MCF 10A (cell line): ENCODE measurements at regions of chr16 and their contacts with region 1.

Region 1: GRCh38 chr16:81940781-81941560 is 70.3 kb downstream of the SDR42E1 start:
- DNase-seq: peak; percentile 66
- H3K4me3 Mint-ChIP-seq: no peak overlapping the region
- H3K27ac Mint-ChIP-seq: no peak overlapping the region
- H3K4me1 Mint-ChIP-seq: peaks cover 7% of the 10 kb centered on the region
- H3K27me3 Mint-ChIP-seq: no peaks in the 10 kb centered on the region
- CTCF ChIP-seq: peak; percentile 62

Region 2: DNA sequence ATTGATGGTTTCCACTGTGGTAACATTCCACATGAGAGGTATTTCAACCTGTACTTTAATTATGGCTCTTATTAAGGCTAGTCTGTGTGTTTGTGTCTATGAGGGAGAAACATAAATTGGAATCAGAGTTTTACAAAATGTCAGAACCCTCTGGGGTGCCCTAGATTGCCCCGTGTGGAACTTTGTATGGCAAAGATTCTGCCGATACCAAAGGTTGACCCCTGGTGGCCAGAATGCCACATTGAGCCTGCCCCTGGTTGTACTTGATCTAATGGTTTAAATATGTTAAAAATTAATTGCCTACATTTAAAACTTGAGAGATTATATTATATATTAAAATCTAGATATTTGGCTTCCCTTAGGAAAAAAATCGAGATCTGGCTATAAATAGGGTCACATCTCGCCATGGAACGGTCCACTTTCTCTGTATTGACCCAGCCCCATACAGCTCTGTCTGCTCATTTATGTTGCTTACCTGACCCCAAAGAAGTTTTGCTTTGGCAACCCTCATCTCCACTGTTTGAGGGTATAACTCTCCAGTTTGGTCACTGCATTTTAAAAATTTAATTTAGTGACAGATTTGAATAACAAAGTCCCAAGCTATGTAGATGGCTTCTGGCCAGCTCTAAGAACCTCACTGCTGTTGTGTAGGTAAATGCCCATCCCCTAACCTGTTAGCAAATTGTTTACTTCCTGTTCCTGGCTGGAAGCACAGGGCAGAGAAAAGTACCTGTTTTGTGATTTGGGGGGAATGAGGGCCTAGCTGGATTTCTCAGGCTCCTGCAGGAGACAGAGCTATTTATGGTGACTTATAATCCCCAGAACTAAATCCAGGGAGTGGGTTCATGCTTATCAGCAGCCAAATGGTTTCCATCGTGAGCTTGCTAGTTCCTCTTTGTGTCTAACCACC is 66.9 kb before region 1 on chr16:
- CTCF ChIA-PET with region 1: no interaction called
- POLR2A ChIA-PET with region 1: no interaction called
- intact Hi-C with region 1: no loop called
- DNase-seq: peak; percentile 58
- H3K4me3 Mint-ChIP-seq: no peak overlapping the region
- H3K27ac Mint-ChIP-seq: no peak overlapping the region
- H3K4me1 Mint-ChIP-seq: no peaks in the 10 kb centered on the region
- H3K27me3 Mint-ChIP-seq: no peaks in the 10 kb centered on the region
- CTCF ChIP-seq: peak; percentile 79

Region 3: GRCh38 chr16:81891736-81892357 is 49.1 kb before region 1 on chr16:
- CTCF ChIA-PET with region 1: interaction called, 6 read pairs
- POLR2A ChIA-PET with region 1: no interaction called
- intact Hi-C with region 1: loop called (anchors 5 kb)
- DNase-seq: no peak
- H3K4me3 Mint-ChIP-seq: no peak overlapping the region
- H3K27ac Mint-ChIP-seq: no peak overlapping the region
- H3K4me1 Mint-ChIP-seq: peaks cover 14% of the 10 kb centered on the region
- H3K27me3 Mint-ChIP-seq: no peaks in the 10 kb centered on the region
- CTCF ChIP-seq: no peak

Region 4: DNA sequence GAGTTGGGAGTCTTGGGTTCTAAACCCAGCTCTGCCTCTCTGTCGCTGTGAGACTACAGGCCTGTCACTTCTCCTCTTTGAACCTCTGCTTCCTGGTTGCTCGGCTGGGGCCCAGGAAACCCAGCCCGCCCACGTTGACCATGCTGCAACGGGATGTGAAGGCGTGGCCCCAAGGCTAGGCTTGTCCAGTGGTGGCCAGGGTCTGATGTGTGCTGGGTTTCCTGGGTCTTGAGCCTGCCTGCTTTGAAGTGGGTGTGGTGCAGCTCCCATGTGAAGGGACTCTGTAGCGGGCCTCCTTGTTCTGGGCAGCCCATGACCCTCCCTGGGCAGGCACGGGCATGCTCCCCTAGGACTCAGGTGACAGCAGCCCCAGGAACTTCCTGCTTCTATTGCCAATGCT is 12.0 kb before region 1 on chr16:
- CTCF ChIA-PET with region 1: interaction called, 29 read pairs
- POLR2A ChIA-PET with region 1: no interaction called
- intact Hi-C with region 1: no loop called
- DNase-seq: peak; percentile 72
- H3K4me3 Mint-ChIP-seq: no peak overlapping the region
- H3K27ac Mint-ChIP-seq: no peak overlapping the region
- H3K4me1 Mint-ChIP-seq: no peaks in the 10 kb centered on the region
- H3K27me3 Mint-ChIP-seq: no peaks in the 10 kb centered on the region
- CTCF ChIP-seq: no peak

Region 5: GRCh38 chr16:81956213-81956948 is 15.4 kb after region 1 on chr16:
- CTCF ChIA-PET with region 1: interaction called, 10 read pairs
- POLR2A ChIA-PET with region 1: no interaction called
- intact Hi-C with region 1: no loop called
- DNase-seq: peak; percentile 87
- H3K4me3 Mint-ChIP-seq: no peak overlapping the region
- H3K27ac Mint-ChIP-seq: no peak overlapping the region
- H3K4me1 Mint-ChIP-seq: no peaks in the 10 kb centered on the region
- H3K27me3 Mint-ChIP-seq: no peaks in the 10 kb centered on the region
- CTCF ChIP-seq: no peak

Region 6: GRCh38 chr16:81996664-81997622 is 56.0 kb after region 1 on chr16:
- CTCF ChIA-PET with region 1: interaction called, 31 read pairs
- POLR2A ChIA-PET with region 1: interaction called, 5 read pairs
- intact Hi-C with region 1: loop called (anchors 2 kb)
- DNase-seq: peak; percentile 84
- H3K4me3 Mint-ChIP-seq: no peak overlapping the region
- H3K27ac Mint-ChIP-seq: peak overlapping the region; percentile 31
- H3K4me1 Mint-ChIP-seq: peaks cover 25% of the 10 kb centered on the region
- H3K27me3 Mint-ChIP-seq: no peaks in the 10 kb centered on the region
- CTCF ChIP-seq: peak; percentile 44

Region 7: GRCh38 chr16:82031116-82032084 is 90.4 kb after region 1 on chr16:
- CTCF ChIA-PET with region 1: interaction called, 16 read pairs
- POLR2A ChIA-PET with region 1: no interaction called
- intact Hi-C with region 1: loop called (anchors 1 kb)
- DNase-seq: peak; percentile 81
- H3K4me3 Mint-ChIP-seq: no peak overlapping the region
- H3K27ac Mint-ChIP-seq: no peak overlapping the region
- H3K4me1 Mint-ChIP-seq: peaks cover 20% of the 10 kb centered on the region
- H3K27me3 Mint-ChIP-seq: no peaks in the 10 kb centered on the region
- CTCF ChIP-seq: peak; percentile 61